Heart left ventricle (tissue), 16 donors: ENCODE measurements at regions of chr12 and their contacts with region 1.

Region 1: DNA sequence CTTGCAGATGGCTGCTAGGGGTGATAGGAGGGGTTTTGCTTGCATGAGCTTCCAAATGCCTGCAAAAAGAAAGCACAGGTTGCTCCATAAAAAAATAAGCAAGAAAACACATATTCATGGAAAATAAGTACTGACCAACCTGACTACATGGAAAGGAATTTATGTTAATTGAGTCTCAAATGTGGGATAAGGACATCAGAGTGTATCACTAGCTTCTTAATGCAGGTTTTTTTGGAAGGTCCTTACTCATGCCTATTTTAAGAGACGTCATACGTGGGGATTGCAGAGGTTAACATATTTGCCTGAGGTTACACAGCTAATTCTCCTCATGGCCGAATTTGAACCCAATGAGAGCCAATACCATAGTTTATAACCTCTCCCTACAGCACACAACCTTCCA is 116.2 kb downstream of the ASCL1 start:
- DNase-seq: no peak
- ATAC-seq: no peak
- H3K4me3 ChIP-seq: no peak overlapping the region
- H3K27ac ChIP-seq: no peak overlapping the region
- H3K4me1 ChIP-seq: no peaks in the 10 kb centered on the region
- H3K27me3 ChIP-seq: no peaks in the 10 kb centered on the region
- CTCF ChIP-seq: no peak
- POLR2A ChIP-seq: no peak

Region 2: GRCh38 chr12:102885043-102885932 is 188.3 kb before region 1 on chr12:
- intact Hi-C with region 1: no loop called
- DNase-seq: no peak
- ATAC-seq: no peak
- H3K4me3 ChIP-seq: no peak overlapping the region
- H3K27ac ChIP-seq: no peak overlapping the region
- H3K4me1 ChIP-seq: no peaks in the 10 kb centered on the region
- H3K27me3 ChIP-seq: peaks cover 0 to 10% (median 0%) of the 10 kb centered on the region in 9 donors
- CTCF ChIP-seq: no peak
- POLR2A ChIP-seq: no peak

Region 3: GRCh38 chr12:103350116-103350515 is 276.5 kb after region 1 on chr12:
- intact Hi-C with region 1: loop called in 1 of 10 experiments (anchors 5 kb)
- DNase-seq: no peak
- ATAC-seq: no peak
- H3K4me3 ChIP-seq: no peak overlapping the region
- H3K27ac ChIP-seq: no peak overlapping the region
- H3K4me1 ChIP-seq: no peaks in the 10 kb centered on the region
- H3K27me3 ChIP-seq: no peaks in the 10 kb centered on the region
- CTCF ChIP-seq: no peak
- POLR2A ChIP-seq: no peak